Activated CD4-positive, alpha-beta memory T cell treated with anti-CD3 and anti-CD28 coated beads for 36 hours (primary cell): ENCODE measurements at regions of chr13 and their contacts with region 1.

Region 1: DNA sequence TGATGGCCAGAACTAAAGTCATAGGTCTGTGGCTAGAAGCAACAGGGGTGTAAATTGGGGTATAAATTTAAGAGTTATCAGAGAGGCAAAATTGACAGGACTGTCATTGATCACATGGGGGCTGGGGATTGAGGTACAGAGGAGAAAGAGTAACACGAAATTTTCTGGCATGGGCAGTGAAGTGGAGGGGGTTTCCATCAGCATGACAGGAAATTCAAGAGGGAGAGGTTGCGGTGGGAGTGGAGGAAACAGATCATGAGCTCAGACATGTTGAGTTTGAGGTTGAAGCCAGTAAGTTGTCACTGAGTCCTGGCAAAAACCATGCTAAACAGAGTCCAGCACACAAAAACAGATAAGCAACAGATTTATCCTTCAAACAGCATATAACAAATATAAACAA is 192.1 kb upstream of the TSC22D1 start:
- DNase-seq: peak; percentile 65
- H3K4me3 Mint-ChIP-seq: no peak overlapping the region
- H3K27ac Mint-ChIP-seq: peak overlapping the region; percentile 51
- H3K4me1 Mint-ChIP-seq: peaks cover 27% of the 10 kb centered on the region
- H3K27me3 Mint-ChIP-seq: no peaks in the 10 kb centered on the region

Region 2: DNA sequence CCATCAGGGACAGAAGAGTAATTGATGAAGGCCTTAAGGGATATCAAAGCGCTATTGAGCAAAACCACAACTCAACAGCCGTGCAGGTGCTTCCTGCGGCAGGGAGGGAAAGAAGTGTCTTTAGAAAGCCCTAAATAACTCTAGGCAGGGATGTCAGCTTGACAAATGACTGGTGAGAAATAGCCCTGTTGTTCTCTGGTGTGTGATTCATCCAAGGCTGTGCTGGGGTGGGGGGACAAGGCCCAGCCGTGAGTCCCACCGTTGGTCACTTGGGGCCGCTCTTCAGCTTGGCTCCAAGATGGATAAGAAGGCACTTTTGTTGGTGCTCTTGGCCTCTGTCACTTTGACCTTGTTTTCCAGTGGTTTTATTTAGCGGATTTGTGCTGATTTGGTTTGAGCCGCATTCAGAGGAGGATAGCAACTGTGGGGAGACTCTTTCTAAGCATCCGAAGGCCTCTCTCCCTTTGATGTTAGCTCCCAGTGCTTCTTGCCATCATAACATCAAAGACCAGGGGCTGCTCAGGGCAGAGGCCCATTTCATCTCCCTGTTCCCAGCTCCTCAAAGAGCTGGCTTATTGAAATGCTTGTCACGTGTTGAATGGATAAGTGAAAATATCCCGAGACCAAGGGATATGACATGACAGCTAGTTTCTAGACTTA is 524.9 kb before region 1 on chr13:
- CTCF ChIA-PET with region 1: no interaction called
- POLR2A ChIA-PET with region 1: no interaction called
- intact Hi-C with region 1: no loop called
- DNase-seq: peak; percentile 34
- H3K4me3 Mint-ChIP-seq: no peak overlapping the region
- H3K27ac Mint-ChIP-seq: no peak overlapping the region
- H3K4me1 Mint-ChIP-seq: no peaks in the 10 kb centered on the region
- H3K27me3 Mint-ChIP-seq: peaks cover 7% of the 10 kb centered on the region

Region 3: DNA sequence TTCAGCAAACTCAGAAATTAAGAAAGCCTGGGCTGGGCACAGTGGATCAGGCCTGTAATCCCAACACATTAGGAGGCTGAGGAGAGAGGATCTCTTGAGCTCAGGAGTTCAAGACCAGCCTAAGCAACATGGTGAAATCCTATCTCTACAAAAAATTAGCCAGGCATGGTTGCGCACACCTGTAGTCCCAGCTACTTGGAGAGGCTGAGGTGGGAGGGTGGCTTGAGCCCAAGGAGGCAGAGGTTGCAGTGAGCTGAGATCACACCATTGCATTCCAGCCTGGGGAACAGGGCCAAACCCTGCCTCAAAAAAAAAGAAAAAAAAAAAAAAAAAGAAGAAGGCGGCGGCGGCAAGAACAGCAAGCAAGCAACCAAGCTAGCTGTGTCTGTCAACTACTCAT is 218.8 kb before region 1 on chr13:
- CTCF ChIA-PET with region 1: no interaction called
- POLR2A ChIA-PET with region 1: no interaction called
- intact Hi-C with region 1: no loop called
- DNase-seq: no peak
- H3K4me3 Mint-ChIP-seq: no peak overlapping the region
- H3K27ac Mint-ChIP-seq: no peak overlapping the region
- H3K4me1 Mint-ChIP-seq: no peaks in the 10 kb centered on the region
- H3K27me3 Mint-ChIP-seq: no peaks in the 10 kb centered on the region

Region 4: DNA sequence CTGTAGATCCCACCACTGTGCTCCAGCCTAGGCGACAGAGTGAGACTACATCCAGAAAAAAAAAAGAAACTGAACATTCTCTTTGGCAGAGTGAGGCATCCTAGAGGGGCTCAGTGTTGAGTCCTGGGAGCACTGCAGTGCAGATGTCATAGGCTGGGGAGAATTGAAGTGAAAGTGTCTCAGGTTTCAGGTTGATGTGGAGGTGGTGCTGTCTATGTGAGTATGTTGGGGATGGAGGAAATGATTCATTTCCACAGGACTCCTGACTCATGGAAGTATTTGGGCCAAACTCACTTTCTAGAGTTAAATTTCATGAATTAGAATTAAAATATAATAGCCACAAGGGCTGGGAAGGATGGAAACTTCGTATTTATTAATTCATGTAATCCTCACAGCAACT is 57.7 kb before region 1 on chr13:
- CTCF ChIA-PET with region 1: interaction called, 3 read pairs
- POLR2A ChIA-PET with region 1: no interaction called
- intact Hi-C with region 1: loop called (anchors 1 kb)
- DNase-seq: peak; percentile 41
- H3K4me3 Mint-ChIP-seq: no peak overlapping the region
- H3K27ac Mint-ChIP-seq: no peak overlapping the region
- H3K4me1 Mint-ChIP-seq: peaks cover 6% of the 10 kb centered on the region
- H3K27me3 Mint-ChIP-seq: peaks cover 22% of the 10 kb centered on the region

Region 5: GRCh38 chr13:44815623-44816022 is 47.4 kb after region 1 on chr13:
- CTCF ChIA-PET with region 1: no interaction called
- POLR2A ChIA-PET with region 1: no interaction called
- intact Hi-C with region 1: loop called (anchors 2 kb)
- DNase-seq: peak; percentile 62
- H3K4me3 Mint-ChIP-seq: no peak overlapping the region
- H3K27ac Mint-ChIP-seq: no peak overlapping the region
- H3K4me1 Mint-ChIP-seq: peaks cover 22% of the 10 kb centered on the region
- H3K27me3 Mint-ChIP-seq: peaks cover 25% of the 10 kb centered on the region

Region 6: GRCh38 chr13:45040622-45041021 is 272.4 kb after region 1 on chr13:
- CTCF ChIA-PET with region 1: no interaction called
- POLR2A ChIA-PET with region 1: no interaction called
- intact Hi-C with region 1: no loop called
- DNase-seq: peak; percentile 24
- H3K4me3 Mint-ChIP-seq: no peak overlapping the region
- H3K27ac Mint-ChIP-seq: no peak overlapping the region
- H3K4me1 Mint-ChIP-seq: no peaks in the 10 kb centered on the region
- H3K27me3 Mint-ChIP-seq: peaks cover 3% of the 10 kb centered on the region

Region 7: GRCh38 chr13:45242070-45242469 is 473.8 kb after region 1 on chr13:
- CTCF ChIA-PET with region 1: no interaction called
- POLR2A ChIA-PET with region 1: no interaction called
- intact Hi-C with region 1: no loop called
- DNase-seq: no peak
- H3K4me3 Mint-ChIP-seq: no peak overlapping the region
- H3K27ac Mint-ChIP-seq: no peak overlapping the region
- H3K4me1 Mint-ChIP-seq: no peaks in the 10 kb centered on the region
- H3K27me3 Mint-ChIP-seq: no peaks in the 10 kb centered on the region